SK-N-SH (cell line): ENCODE measurements at regions of chr7 and their contacts with region 1.

Region 1: GRCh38 chr7:124784879-124785818 is 19.6 kb upstream of the GPR37 start:
- DNase-seq: peak; percentile 76
- H3K4me3 ChIP-seq: no peak overlapping the region; a peak in 1 of 4 replicates
- H3K27ac ChIP-seq: no peak overlapping the region
- H3K4me1 ChIP-seq: no peaks in the 10 kb centered on the region
- H3K27me3 ChIP-seq: no peaks in the 10 kb centered on the region
- CTCF ChIP-seq: peak; percentile 98
- EP300 ChIP-seq: no peak; a peak in 1 of 4 replicates
- RAD21 ChIP-seq: peak; percentile 100

Region 2: GRCh38 chr7:124152859-124153692 is 632.1 kb before region 1 on chr7:
- CTCF ChIA-PET with region 1: interaction called, 102 read pairs
- POLR2A ChIA-PET with region 1: no interaction called
- DNase-seq: peak; percentile 34
- H3K4me3 ChIP-seq: no peak overlapping the region
- H3K27ac ChIP-seq: peak overlapping the region in 1 of 2 experiments; percentile 39; a peak in 2 of 4 replicates
- H3K4me1 ChIP-seq: peaks cover 0 to 6% of the 10 kb centered on the region in 2 experiments; a peak in 2 of 4 replicates
- H3K27me3 ChIP-seq: no peaks in the 10 kb centered on the region
- CTCF ChIP-seq: peak; percentile 60
- EP300 ChIP-seq: no peak
- RAD21 ChIP-seq: peak; percentile 66

Region 3: DNA sequence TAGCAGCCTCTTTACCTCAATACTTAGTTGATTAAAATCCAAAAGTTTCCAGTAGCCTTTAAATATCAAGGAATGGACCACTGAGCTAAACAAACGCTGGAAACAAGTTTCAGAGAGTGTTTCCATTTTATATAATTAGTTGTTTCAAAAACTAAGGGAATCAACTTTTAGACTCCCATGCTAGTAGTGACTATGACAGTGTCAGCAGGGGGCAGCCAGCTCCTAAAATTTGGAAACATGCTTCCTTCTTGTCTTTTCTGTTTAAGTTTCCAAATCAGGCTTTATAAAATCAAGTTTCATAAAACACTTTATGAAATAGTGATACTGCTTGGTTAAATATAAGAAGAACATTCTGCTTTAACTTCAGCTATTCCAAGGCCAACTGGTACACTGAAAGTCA is 614.1 kb before region 1 on chr7:
- CTCF ChIA-PET with region 1: interaction called, 54 read pairs
- POLR2A ChIA-PET with region 1: no interaction called
- DNase-seq: peak; percentile 4
- H3K4me3 ChIP-seq: no peak overlapping the region
- H3K27ac ChIP-seq: no peak overlapping the region
- H3K4me1 ChIP-seq: no peaks in the 10 kb centered on the region
- H3K27me3 ChIP-seq: no peaks in the 10 kb centered on the region
- CTCF ChIP-seq: peak; percentile 62
- EP300 ChIP-seq: no peak
- RAD21 ChIP-seq: peak; percentile 81

Region 4: DNA sequence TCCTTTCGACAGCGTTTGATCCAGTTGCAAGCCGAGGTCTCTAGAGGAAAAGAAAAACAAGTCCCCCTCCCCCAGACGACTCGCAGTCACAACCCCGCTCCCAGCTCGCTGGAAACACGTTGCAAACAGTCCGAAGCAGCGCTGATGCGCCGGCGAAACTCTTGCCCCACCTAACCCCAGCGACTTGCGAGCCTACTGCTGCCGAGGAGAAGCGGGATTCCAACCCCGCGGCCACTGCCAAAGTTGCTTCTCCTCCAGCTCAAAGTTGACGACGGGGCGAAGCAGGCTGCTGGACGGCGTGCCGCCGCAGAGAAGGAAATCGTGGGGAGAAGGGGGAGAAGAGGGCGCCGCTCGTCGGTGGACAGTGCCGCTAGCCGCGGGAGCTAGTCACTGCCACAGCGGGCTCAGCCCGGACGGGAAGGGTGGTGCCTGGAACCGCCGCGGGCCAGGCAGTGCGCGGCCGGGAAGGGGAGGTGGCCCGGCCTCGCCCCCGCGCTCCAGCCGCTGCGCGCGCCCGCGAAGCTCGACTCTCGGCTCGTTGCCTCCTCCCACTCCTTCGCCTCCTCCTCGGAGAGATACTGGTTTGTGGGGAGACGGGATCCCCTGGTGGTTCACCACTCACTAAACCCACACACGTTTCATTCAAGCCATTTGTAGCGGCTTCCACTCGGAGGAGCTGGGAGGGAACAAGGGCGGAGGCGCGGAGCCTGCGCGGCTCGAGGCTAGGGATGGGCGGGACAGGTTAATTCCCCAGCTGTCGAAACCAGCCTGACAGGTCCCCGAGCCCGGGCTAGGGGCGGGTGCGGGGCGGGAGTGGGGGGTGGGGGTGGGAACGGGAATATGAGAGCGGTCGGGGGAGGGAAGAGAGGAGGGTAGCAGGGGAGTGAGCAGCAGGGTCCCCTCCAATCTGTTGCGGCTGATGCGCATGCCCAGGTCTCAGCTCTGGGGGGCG is 19.5 kb before region 1 on chr7 and contains the start of gene GPR37:
- CTCF ChIA-PET with region 1: interaction called, 47 read pairs
- POLR2A ChIA-PET with region 1: no interaction called
- DNase-seq: peak; percentile 95
- H3K4me3 ChIP-seq: peak within 1 kb of the TSS; percentile 69 to 75
- H3K27ac ChIP-seq: no peak within 1 kb of the TSS; a peak in 1 of 4 replicates
- H3K4me1 ChIP-seq: peaks cover 0 to 14% of the 10 kb centered on the region in 2 experiments; a peak in 1 of 4 replicates
- H3K27me3 ChIP-seq: peaks cover 24% of the 10 kb centered on the region
- CTCF ChIP-seq: no peak
- EP300 ChIP-seq: no peak
- RAD21 ChIP-seq: peak; percentile 51
- polyA plus RNA-seq, gene GPR37: 0.03 TPM in 1 of 2 replicates, not detected in the other

Region 5: DNA sequence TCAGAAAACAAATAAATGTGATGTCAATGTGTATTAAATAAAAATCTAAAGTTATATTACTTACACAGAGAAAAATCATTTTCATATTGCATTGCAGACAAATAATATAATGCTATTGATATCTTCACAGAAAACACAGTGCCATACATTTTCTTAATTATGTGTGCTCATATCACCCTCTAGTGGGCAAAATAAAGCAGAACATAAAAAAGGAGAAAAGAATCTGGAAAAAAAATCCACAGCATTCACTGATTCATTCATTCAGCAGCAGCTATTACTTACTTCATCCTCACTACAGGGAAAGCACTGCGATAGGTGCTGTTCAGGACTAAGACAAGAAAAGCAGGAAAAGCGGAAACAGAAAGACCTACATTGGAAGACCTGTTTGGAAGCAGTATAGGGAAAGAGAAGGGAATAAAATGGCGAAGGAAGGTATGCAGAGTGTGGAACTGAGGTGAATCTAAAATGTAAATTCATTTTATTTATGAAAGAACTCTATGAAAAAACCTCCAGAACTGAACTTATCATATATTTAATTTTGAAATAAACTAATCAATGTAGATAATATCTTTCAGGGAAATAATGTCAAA is 71.2 kb after region 1 on chr7:
- CTCF ChIA-PET with region 1: interaction called, 20 read pairs
- POLR2A ChIA-PET with region 1: no interaction called
- DNase-seq: peak; percentile 37
- H3K4me3 ChIP-seq: no peak overlapping the region; a peak in 1 of 4 replicates
- H3K27ac ChIP-seq: peak overlapping the region in 1 of 2 experiments; percentile 51; a peak in 2 of 4 replicates
- H3K4me1 ChIP-seq: peaks cover 0 to 7% of the 10 kb centered on the region in 2 experiments; a peak in 1 of 4 replicates
- H3K27me3 ChIP-seq: no peaks in the 10 kb centered on the region
- CTCF ChIP-seq: peak; percentile 94
- EP300 ChIP-seq: no peak
- RAD21 ChIP-seq: peak; percentile 77